ENCODE measurements at regions of chr11 and their contacts with region 1.

Region 1: DNA sequence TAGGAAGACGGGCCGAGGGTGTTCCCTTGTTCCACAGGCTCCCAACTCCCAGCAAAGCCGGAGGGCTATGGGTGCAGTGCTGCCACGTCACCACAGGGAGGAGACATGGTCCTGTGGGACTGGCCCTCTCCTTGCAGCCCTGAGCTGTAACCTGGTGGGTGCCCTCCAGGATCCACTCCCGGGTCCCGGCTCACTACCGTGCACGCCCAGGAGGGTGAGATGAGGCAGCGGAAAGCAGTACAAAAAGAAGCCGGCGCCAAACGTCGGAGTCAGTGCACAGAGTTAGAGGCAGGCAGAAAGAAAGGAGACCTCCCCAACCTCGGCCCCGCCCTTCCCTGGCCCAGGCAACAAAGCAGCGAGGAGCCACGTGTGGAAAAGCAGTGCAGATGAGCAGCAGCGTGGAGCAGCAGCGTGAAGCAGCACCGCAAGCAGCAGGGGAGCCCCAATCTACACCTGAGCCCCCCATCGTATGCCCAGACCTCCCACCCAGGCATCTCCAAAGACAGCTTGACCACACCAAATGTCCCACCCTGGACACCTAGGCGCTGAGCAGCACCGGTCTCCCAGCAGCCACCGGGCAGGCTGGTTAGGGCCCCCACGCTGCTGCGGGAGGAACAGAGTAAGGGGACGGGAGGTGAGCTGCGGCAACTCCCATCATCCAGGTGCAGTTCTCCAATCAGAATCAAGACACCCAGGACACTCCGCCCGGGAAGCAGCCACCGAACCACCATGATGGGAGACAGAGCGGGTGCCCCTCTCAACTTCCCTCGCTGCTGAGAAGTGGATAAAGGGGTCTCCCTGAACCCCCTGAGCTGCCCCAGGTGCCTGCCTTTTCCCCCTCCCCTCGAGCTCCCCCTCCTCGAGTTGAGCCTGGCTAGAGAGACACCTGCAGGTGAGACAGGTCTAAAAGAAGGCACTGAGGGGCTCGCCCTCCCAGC is 28.8 kb downstream of the IGSF9B start:
- DNase-seq: peak; percentile 45 to 73 (median 54)
- H3K4me3 ChIP-seq: peak overlapping the region; percentile 59
- H3K4me3 Mint-ChIP-seq: peak overlapping the region; percentile 18 to 94 (median 88)
- H3K27ac ChIP-seq: no peak overlapping the region
- H3K27ac Mint-ChIP-seq: peak overlapping the region in 6 of 8 donors; percentile 27 to 97 (median 90)
- H3K4me1 ChIP-seq: peaks cover 26% of the 10 kb centered on the region
- H3K4me1 Mint-ChIP-seq: peaks cover 16 to 20% (median 20%) of the 10 kb centered on the region in 3 donors
- H3K27me3 ChIP-seq: no peaks in the 10 kb centered on the region
- H3K27me3 Mint-ChIP-seq: no peaks in the 10 kb centered on the region

Region 2: GRCh38 chr11:133947321-133947756 is 19.4 kb after region 1 on chr11:
- CTCF ChIA-PET with region 1: interaction called, 31 read pairs
- POLR2A ChIA-PET with region 1: no interaction called
- DNase-seq: peak; percentile 35 to 75 (median 63)
- H3K4me3 ChIP-seq: peak overlapping the region; percentile 61
- H3K4me3 Mint-ChIP-seq: peak overlapping the region; percentile 53 to 86 (median 71)
- H3K27ac ChIP-seq: no peak overlapping the region
- H3K27ac Mint-ChIP-seq: peak overlapping the region in 6 of 8 donors; percentile 55 to 98 (median 91)
- H3K4me1 ChIP-seq: peaks cover 61% of the 10 kb centered on the region
- H3K4me1 Mint-ChIP-seq: peaks cover 42 to 69% (median 66%) of the 10 kb centered on the region in 3 donors
- H3K27me3 ChIP-seq: no peaks in the 10 kb centered on the region
- H3K27me3 Mint-ChIP-seq: peaks cover 4 to 13% of the 10 kb centered on the region in 2 donors

Region 3: GRCh38 chr11:134026655-134027343 is 98.8 kb after region 1 on chr11:
- CTCF ChIA-PET with region 1: interaction called, 11 read pairs
- POLR2A ChIA-PET with region 1: no interaction called
- DNase-seq: peak in 1 of 5 donors; percentile 31
- H3K4me3 ChIP-seq: no peak overlapping the region
- H3K4me3 Mint-ChIP-seq: peak overlapping the region in 2 of 7 donors; percentile 37 to 54
- H3K27ac ChIP-seq: no peak overlapping the region
- H3K27ac Mint-ChIP-seq: peak overlapping the region; percentile 27 to 88 (median 68)
- H3K4me1 ChIP-seq: peaks cover 28% of the 10 kb centered on the region
- H3K4me1 Mint-ChIP-seq: peaks cover 35 to 41% (median 36%) of the 10 kb centered on the region in 3 donors
- H3K27me3 ChIP-seq: no peaks in the 10 kb centered on the region
- H3K27me3 Mint-ChIP-seq: peaks cover 5 to 6% of the 10 kb centered on the region in 2 donors

Region 4: DNA sequence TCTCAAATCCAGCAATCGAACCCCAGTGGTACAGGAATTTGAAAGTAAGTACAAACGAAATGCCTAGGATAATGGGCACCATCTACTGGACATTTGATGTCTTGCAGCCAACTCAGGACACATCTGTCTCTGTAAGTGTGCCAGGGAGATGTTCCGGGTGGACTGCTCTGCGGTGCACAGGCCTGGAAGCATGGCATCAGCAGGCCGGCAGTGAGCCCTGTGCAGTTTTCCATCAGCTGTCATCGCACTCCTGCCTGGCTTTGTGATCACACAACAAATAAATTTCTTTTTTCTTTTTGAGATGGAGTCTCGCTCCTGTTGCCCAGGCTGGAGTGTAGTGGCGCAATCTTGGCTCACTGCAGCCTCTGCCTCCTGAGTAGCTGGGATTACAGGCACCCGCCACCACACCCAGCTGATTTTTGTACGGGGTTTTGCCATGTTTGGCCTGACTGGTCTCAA is 211.9 kb after region 1 on chr11:
- CTCF ChIA-PET with region 1: interaction called, 16 read pairs
- POLR2A ChIA-PET with region 1: no interaction called
- DNase-seq: peak in 4 of 5 donors; percentile 20 to 56 (median 45)
- H3K4me3 ChIP-seq: no peak overlapping the region
- H3K4me3 Mint-ChIP-seq: no peak overlapping the region
- H3K27ac ChIP-seq: no peak overlapping the region
- H3K27ac Mint-ChIP-seq: no peak overlapping the region
- H3K4me1 ChIP-seq: no peaks in the 10 kb centered on the region
- H3K4me1 Mint-ChIP-seq: peaks cover 1 to 15% (median 8%) of the 10 kb centered on the region in 3 donors
- H3K27me3 ChIP-seq: no peaks in the 10 kb centered on the region
- H3K27me3 Mint-ChIP-seq: no peaks in the 10 kb centered on the region